ENCODE measurements at regions of chr6 and their contacts with region 1.

Region 1: DNA sequence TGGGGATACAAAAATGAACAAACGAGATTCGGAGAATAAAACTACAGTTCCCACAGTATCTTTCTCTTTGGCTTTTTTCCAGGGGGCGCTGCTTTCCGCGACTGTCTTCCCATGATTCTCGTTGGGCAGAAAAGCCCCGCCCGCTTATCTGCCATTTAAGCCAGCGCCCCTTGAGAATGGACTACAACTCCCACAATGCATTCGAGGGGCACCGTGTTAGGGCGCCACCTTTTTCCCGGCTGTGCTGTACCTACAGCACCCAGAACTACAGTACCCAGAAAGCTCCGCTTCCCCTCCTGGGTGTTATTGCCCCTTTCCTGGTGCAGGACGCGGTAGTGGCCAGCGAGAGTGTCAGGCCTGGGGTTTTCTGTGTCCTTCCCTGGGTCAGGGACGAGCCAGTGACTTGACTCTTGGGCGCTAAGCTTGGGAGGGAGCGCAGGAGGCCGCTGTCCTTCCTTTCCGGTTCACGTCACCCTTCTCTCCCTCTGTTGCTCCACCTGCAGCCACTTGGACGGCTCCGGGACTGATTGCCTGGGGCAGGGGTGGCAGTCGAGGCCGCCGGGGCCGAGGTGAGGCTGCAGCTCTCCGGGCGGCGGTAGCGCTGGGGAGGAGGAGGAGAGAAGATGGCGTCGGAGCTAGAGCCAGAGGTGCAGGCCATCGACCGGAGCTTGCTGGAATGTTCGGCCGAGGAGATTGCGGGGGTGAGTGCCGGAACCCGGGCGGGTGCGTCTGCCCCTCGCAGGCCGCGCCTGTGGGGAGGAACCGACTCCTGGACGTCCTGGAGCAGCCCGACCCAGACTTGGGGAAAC is at the start of gene UBR2:
- DNase-seq: peak; percentile 67 to 97 (median 93)
- ATAC-seq: peak; percentile 99
- H3K4me3 ChIP-seq: peak within 1 kb of the TSS; percentile 92
- H3K4me3 Mint-ChIP-seq: peak within 1 kb of the TSS; percentile 94 to 100 (median 96)
- H3K27ac ChIP-seq: peak within 1 kb of the TSS; percentile 95
- H3K27ac Mint-ChIP-seq: peak within 1 kb of the TSS; percentile 89 to 98 (median 93)
- H3K4me1 ChIP-seq: peaks cover 7 to 12% of the 10 kb centered on the region in 2 donors
- H3K4me1 Mint-ChIP-seq: peaks cover 17 to 43% (median 29%) of the 10 kb centered on the region in 7 donors
- H3K27me3 ChIP-seq: no peaks in the 10 kb centered on the region
- H3K27me3 Mint-ChIP-seq: peaks cover 0 to 7% (median 0%) of the 10 kb centered on the region in 5 donors
- total RNA-seq, gene UBR2: 35.6 to 45.5 (median 38.9) TPM

Region 2: DNA sequence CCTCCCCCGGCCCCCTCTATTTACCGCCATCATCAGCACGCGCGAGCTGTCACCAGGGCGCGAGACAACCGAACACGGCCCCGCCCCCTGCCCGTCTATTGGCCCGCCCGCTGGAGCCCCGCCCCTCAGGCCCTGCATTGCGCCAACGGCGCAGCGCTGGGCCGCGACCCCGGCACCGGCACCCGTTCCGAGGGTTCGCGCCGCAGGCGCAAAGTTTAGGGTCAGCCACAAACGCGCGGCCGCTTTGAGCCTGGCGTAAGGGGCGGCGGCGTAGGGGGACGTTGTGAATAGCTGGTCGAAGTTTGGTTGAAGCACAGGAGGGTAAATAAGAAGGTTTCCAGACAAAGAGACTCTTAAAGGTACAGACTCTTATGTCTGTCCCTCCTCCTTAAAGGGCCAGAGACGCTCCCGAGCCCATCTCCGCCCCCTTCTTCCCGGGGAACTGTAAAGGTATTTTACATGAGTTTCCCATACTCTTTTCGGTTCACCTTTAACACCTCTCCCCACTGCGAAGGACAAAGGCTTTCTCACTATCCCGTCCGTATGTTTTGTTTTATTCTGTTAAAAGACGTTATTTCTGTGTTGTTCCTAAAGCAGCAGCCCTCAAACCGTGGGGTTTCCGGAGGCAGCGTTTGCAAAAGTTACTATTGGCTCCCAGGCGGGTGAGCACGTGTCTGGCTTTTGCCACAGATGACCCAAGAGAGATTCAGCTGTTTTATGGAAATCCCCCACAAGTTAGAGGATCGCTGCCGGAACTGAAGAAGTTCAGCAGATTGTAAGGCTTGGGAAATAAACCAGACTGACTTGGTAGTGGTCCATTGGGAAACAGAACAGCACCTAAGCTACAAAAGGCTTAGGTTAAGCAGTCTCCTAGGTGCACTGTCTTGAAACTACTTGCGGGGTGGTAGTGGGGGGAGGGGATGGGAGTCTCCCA is 668.3 kb before region 1 on chr6 and contains the start of gene USP49:
- CTCF ChIA-PET with region 1: no interaction called
- POLR2A ChIA-PET with region 1: no interaction called
- intact Hi-C with region 1: loop called in 1 of 2 experiments (anchors 1 kb)
- DNase-seq: peak; percentile 83 to 92 (median 90)
- ATAC-seq: peak; percentile 97
- H3K4me3 ChIP-seq: peak within 1 kb of the TSS; percentile 69
- H3K4me3 Mint-ChIP-seq: peak within 1 kb of the TSS in 1 of 10 donors; percentile 94
- H3K27ac ChIP-seq: peak within 1 kb of the TSS; percentile 76
- H3K27ac Mint-ChIP-seq: peak within 1 kb of the TSS in 7 of 9 donors; percentile 78 to 97 (median 93)
- H3K4me1 ChIP-seq: peaks cover 14 to 26% of the 10 kb centered on the region in 2 donors
- H3K4me1 Mint-ChIP-seq: peaks cover 5 to 17% (median 11%) of the 10 kb centered on the region in 7 donors
- H3K27me3 ChIP-seq: no peaks in the 10 kb centered on the region
- H3K27me3 Mint-ChIP-seq: peaks cover 0 to 7% (median 0%) of the 10 kb centered on the region in 5 donors
- total RNA-seq, gene USP49: 1.8 to 6.0 (median 3.1) TPM

Region 3: GRCh38 chr6:42217519-42218367 is 346.2 kb before region 1 on chr6 and contains the start of gene MRPS10:
- CTCF ChIA-PET with region 1: interaction called, 3 read pairs
- POLR2A ChIA-PET with region 1: interaction called, 12 read pairs
- intact Hi-C with region 1: loop called (anchors 1 kb)
- DNase-seq: peak; percentile 72 to 92 (median 87)
- ATAC-seq: peak; percentile 100
- H3K4me3 ChIP-seq: peak within 1 kb of the TSS; percentile 96
- H3K4me3 Mint-ChIP-seq: peak within 1 kb of the TSS; percentile 92 to 100 (median 98)
- H3K27ac ChIP-seq: peak within 1 kb of the TSS; percentile 77
- H3K27ac Mint-ChIP-seq: peak within 1 kb of the TSS; percentile 87 to 99 (median 97)
- H3K4me1 ChIP-seq: peaks cover 9 to 14% of the 10 kb centered on the region in 2 donors
- H3K4me1 Mint-ChIP-seq: peaks cover 7 to 34% (median 24%) of the 10 kb centered on the region in 7 donors
- H3K27me3 ChIP-seq: no peaks in the 10 kb centered on the region
- H3K27me3 Mint-ChIP-seq: no peaks in the 10 kb centered on the region
- total RNA-seq, gene MRPS10: 17.0 to 30.3 (median 25.3) TPM

Region 4: GRCh38 chr6:42505377-42505702 is 58.6 kb before region 1 on chr6:
- CTCF ChIA-PET with region 1: no interaction called
- POLR2A ChIA-PET with region 1: no interaction called
- intact Hi-C with region 1: no loop called
- DNase-seq: no peak
- ATAC-seq: no peak
- H3K4me3 ChIP-seq: no peak overlapping the region
- H3K4me3 Mint-ChIP-seq: no peak overlapping the region
- H3K27ac ChIP-seq: no peak overlapping the region
- H3K27ac Mint-ChIP-seq: no peak overlapping the region
- H3K4me1 ChIP-seq: no peaks in the 10 kb centered on the region
- H3K4me1 Mint-ChIP-seq: peaks cover 0 to 4% (median 2%) of the 10 kb centered on the region in 7 donors
- H3K27me3 ChIP-seq: no peaks in the 10 kb centered on the region
- H3K27me3 Mint-ChIP-seq: peaks cover 0 to 12% (median 0%) of the 10 kb centered on the region in 5 donors

Region 5: GRCh38 chr6:42520786-42521607 is 42.9 kb before region 1 on chr6:
- CTCF ChIA-PET with region 1: no interaction called
- POLR2A ChIA-PET with region 1: no interaction called
- intact Hi-C with region 1: no loop called
- DNase-seq: peak in 1 of 9 donors; percentile 28
- ATAC-seq: peak; percentile 69
- H3K4me3 ChIP-seq: no peak overlapping the region
- H3K4me3 Mint-ChIP-seq: no peak overlapping the region
- H3K27ac ChIP-seq: no peak overlapping the region
- H3K27ac Mint-ChIP-seq: no peak overlapping the region
- H3K4me1 ChIP-seq: no peaks in the 10 kb centered on the region
- H3K4me1 Mint-ChIP-seq: peaks cover 0 to 7% (median 0%) of the 10 kb centered on the region in 7 donors
- H3K27me3 ChIP-seq: no peaks in the 10 kb centered on the region
- H3K27me3 Mint-ChIP-seq: no peaks in the 10 kb centered on the region

Region 6: DNA sequence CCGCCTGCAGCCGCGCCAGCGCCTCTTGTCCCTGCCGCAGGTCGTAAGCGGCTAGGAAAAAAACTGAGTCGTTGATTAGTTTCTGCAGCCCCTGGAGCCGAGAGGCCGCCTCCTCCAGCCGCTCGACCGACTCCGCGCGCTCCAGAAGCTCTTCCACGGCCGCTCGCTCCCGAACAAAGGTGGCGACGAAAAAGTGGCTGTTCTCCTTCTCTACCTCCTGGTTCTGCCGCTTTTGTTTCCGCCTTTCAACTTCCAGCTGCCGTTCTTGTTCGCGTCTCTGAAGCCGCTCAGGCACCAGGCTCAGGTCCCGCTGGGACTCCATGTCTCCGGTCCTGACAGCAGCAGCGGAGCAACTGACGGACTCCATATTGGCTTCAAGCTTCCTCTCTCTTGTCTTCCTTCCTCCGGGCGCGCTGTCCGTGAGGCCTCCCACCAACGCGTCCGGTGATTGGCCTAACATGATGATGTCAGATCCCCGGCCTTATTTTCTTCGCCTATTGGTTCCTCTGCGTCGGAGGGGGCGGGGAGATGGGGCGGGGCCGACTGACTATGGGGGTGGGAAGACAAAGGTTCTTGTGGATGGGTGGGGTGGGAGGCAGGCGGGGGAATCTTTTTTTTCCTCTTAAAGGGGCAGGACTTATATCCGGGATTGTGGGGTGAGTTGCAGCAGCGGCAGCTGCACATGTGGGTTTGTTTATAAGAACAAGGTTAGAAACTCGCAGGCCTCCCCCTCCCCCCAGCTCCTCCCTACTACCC is 182.0 kb after region 1 on chr6 and contains the start of gene TBCC:
- CTCF ChIA-PET with region 1: no interaction called
- POLR2A ChIA-PET with region 1: no interaction called
- intact Hi-C with region 1: loop called (anchors 2 to 10 kb)
- DNase-seq: peak; percentile 73 to 97 (median 93)
- ATAC-seq: peak; percentile 88
- H3K4me3 ChIP-seq: peak within 1 kb of the TSS; percentile 95
- H3K4me3 Mint-ChIP-seq: peak within 1 kb of the TSS; percentile 91 to 100 (median 99)
- H3K27ac ChIP-seq: peak within 1 kb of the TSS; percentile 88
- H3K27ac Mint-ChIP-seq: peak within 1 kb of the TSS; percentile 97 to 100 (median 100)
- H3K4me1 ChIP-seq: peaks cover 19 to 29% of the 10 kb centered on the region in 2 donors
- H3K4me1 Mint-ChIP-seq: peaks cover 12 to 39% (median 27%) of the 10 kb centered on the region in 7 donors
- H3K27me3 ChIP-seq: no peaks in the 10 kb centered on the region
- H3K27me3 Mint-ChIP-seq: no peaks in the 10 kb centered on the region
- total RNA-seq, gene TBCC: 39.6 to 74.8 (median 71.4) TPM

Region 7: GRCh38 chr6:43001843-43002242 is 437.9 kb after region 1 on chr6:
- CTCF ChIA-PET with region 1: no interaction called
- POLR2A ChIA-PET with region 1: no interaction called
- intact Hi-C with region 1: no loop called
- DNase-seq: no peak
- ATAC-seq: no peak
- H3K4me3 ChIP-seq: no peak overlapping the region
- H3K4me3 Mint-ChIP-seq: no peak overlapping the region
- H3K27ac ChIP-seq: no peak overlapping the region
- H3K27ac Mint-ChIP-seq: no peak overlapping the region
- H3K4me1 ChIP-seq: no peaks in the 10 kb centered on the region
- H3K4me1 Mint-ChIP-seq: peaks cover 0 to 5% (median 4%) of the 10 kb centered on the region in 7 donors
- H3K27me3 ChIP-seq: no peaks in the 10 kb centered on the region
- H3K27me3 Mint-ChIP-seq: no peaks in the 10 kb centered on the region

Region 8: DNA sequence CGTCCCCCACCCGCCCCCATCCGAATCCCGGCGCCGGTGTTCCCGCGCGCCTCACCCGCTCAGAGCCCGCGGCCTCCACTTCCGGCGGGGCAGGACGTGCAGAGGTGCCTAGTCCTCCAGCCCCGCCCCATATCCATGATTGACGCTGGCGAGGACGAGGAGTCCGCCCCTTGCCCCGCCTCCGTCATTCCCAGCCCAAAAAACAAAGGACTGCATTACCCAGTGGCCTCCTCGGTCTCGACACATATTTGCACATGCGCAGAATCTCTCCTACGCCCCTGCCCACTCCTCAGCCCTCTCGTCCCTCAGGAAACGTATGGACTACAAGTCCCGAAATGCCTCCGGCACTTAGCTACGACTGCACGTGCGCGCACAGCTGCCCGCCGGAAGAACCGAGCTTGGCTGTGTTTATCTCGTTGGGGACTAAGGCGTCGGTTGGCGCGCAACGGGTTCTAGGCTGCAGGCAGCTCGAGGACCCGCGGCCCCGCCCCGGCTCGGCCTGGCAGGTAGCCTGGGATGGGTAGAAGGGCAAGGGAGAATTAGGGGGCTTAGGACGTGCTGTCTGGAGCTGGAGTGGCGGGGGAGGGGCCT is 450.0 kb after region 1 on chr6 and contains the starts of genes KLHDC3 and MEA1:
- CTCF ChIA-PET with region 1: no interaction called
- POLR2A ChIA-PET with region 1: no interaction called
- intact Hi-C with region 1: loop called (anchors 1 kb)
- DNase-seq: peak; percentile 83 to 100 (median 99)
- ATAC-seq: peak; percentile 98
- H3K4me3 ChIP-seq: peak within 1 kb of the TSS; percentile 73
- H3K4me3 Mint-ChIP-seq: peak within 1 kb of the TSS; percentile 85 to 99 (median 92)
- H3K27ac ChIP-seq: peak within 1 kb of the TSS; percentile 84
- H3K27ac Mint-ChIP-seq: peak within 1 kb of the TSS; percentile 82 to 97 (median 92)
- H3K4me1 ChIP-seq: peaks cover 20 to 31% of the 10 kb centered on the region in 2 donors
- H3K4me1 Mint-ChIP-seq: peaks cover 45 to 78% (median 58%) of the 10 kb centered on the region in 7 donors
- H3K27me3 ChIP-seq: no peaks in the 10 kb centered on the region
- H3K27me3 Mint-ChIP-seq: peaks cover 0 to 3% (median 0%) of the 10 kb centered on the region in 5 donors
- total RNA-seq, gene KLHDC3: 39.9 to 76.9 (median 67.4) TPM
- total RNA-seq, gene MEA1: 20.3 to 58.0 (median 32.7) TPM

Region 9: GRCh38 chr6:43299338-43300293 is 735.7 kb after region 1 on chr6:
- CTCF ChIA-PET with region 1: no interaction called
- POLR2A ChIA-PET with region 1: no interaction called
- intact Hi-C with region 1: no loop called
- DNase-seq: no peak
- ATAC-seq: no peak
- H3K4me3 ChIP-seq: no peak overlapping the region
- H3K4me3 Mint-ChIP-seq: peak overlapping the region in 1 of 10 donors; percentile 30
- H3K27ac ChIP-seq: no peak overlapping the region
- H3K27ac Mint-ChIP-seq: peak overlapping the region in 1 of 9 donors; percentile 28
- H3K4me1 ChIP-seq: no peaks in the 10 kb centered on the region
- H3K4me1 Mint-ChIP-seq: peaks cover 0 to 7% (median 0%) of the 10 kb centered on the region in 7 donors
- H3K27me3 ChIP-seq: no peaks in the 10 kb centered on the region
- H3K27me3 Mint-ChIP-seq: peaks cover 0 to 9% (median 7%) of the 10 kb centered on the region in 5 donors

Region 10: DNA sequence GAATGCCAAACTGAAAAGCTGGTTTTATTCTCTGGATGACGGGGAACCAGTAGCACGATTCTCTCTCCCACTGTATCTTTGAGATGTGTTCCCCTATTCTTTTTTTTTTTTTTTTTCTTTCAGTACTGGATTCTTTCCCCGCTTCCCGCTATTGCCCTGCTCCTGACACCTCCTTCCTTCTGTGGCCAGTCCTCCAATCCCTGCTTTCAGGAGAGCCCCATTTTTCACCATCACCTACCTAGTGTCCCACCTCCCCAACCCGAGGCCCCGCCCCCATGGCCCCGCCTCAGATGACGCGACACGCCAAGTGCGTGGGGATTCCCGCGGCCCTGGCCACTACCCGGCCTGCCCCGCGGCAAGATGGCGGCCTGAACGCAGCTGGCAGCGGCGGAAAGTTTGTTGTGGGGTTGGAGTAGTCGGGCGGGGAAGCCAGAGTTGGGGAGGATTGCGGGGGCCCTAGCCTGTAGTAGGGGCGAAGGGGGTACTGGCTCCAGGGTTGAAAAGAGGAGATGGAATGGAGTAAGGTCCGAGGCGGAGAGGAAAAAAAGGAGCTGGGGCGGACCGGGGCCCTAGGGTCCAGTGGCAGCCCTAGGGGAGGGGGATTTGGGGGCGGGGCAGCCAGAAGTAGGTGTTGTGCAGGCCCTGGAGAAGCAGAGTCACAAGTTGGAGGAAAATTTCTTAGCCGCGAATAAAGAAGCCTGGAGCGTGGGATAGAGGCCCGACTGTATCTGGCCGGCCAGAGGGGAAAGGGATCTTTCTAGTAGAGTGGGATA is 913.5 kb after region 1 on chr6 and contains the start of gene TJAP1:
- CTCF ChIA-PET with region 1: no interaction called
- POLR2A ChIA-PET with region 1: no interaction called
- intact Hi-C with region 1: loop called in 1 of 2 experiments (anchors 1 kb)
- DNase-seq: peak; percentile 89 to 99 (median 95)
- ATAC-seq: peak; percentile 100
- H3K4me3 ChIP-seq: peak within 1 kb of the TSS; percentile 83
- H3K4me3 Mint-ChIP-seq: peak within 1 kb of the TSS; percentile 87 to 99 (median 93)
- H3K27ac ChIP-seq: peak within 1 kb of the TSS; percentile 96
- H3K27ac Mint-ChIP-seq: peak within 1 kb of the TSS; percentile 90 to 98 (median 96)
- H3K4me1 ChIP-seq: peaks cover 10 to 16% of the 10 kb centered on the region in 2 donors
- H3K4me1 Mint-ChIP-seq: peaks cover 37 to 54% (median 51%) of the 10 kb centered on the region in 7 donors
- H3K27me3 ChIP-seq: no peaks in the 10 kb centered on the region
- H3K27me3 Mint-ChIP-seq: no peaks in the 10 kb centered on the region
- total RNA-seq, gene TJAP1: 29.2 to 55.2 (median 33.5) TPM

Measured in naive thymus-derived CD4-positive, alpha-beta T cell (primary cell).